Naive thymus-derived CD4-positive, alpha-beta T cell (primary cell): ENCODE measurements at regions of chr12 and their contacts with region 1.

Region 1: DNA sequence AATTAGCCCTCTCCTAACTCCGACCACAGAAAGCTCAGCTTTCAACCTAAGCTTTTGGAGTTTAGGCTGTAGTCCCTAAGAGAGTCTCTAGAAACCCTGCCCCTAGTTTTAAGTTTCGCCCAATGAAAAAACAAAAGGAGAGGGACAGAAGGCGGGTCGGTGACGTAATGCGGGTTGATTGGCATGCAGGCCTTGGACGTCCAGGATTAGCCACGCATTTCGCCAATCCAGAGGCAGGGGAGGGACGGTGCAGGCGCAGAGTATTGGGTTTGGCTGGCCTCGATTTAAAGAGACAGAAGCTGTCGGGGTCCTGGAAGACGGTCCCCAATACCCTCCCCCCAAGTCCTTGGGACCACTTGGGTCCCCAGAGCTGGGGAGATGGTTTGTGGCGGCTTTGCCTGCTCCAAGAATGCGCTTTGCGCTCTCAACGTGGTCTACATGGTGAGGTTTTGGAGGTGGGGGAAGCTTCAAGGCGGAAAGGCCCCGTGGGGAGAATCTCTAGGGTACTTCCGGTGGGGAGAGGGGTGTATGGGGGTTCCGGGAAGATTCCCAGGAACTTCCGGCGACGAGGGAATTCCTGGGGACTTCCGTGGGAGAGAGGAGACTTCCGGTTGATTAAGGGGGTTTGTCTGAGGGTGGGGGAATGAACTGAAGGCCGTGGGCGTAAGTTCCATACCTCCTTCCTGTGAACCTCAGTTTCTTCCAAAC is at the start of gene TSPAN31:
- DNase-seq: peak; percentile 70 to 97 (median 94)
- ATAC-seq: peak; percentile 89
- H3K4me3 ChIP-seq: peak within 1 kb of the TSS; percentile 92
- H3K4me3 Mint-ChIP-seq: peak within 1 kb of the TSS; percentile 82 to 100 (median 91)
- H3K27ac ChIP-seq: peak within 1 kb of the TSS; percentile 91
- H3K27ac Mint-ChIP-seq: peak within 1 kb of the TSS; percentile 88 to 97 (median 95)
- H3K4me1 ChIP-seq: peaks cover 33 to 34% of the 10 kb centered on the region in 2 donors
- H3K4me1 Mint-ChIP-seq: peaks cover 35 to 64% (median 52%) of the 10 kb centered on the region in 7 donors
- H3K27me3 ChIP-seq: no peaks in the 10 kb centered on the region
- H3K27me3 Mint-ChIP-seq: no peaks in the 10 kb centered on the region
- total RNA-seq, gene TSPAN31: 12.3 to 23.9 (median 20.3) TPM

Region 2: GRCh38 chr12:56333679-56334489 is 1411.0 kb before region 1 on chr12 and contains the start of gene PAN2:
- CTCF ChIA-PET with region 1: no interaction called
- POLR2A ChIA-PET with region 1: no interaction called
- intact Hi-C with region 1: loop called in 1 of 2 experiments (anchors 10 kb)
- DNase-seq: peak; percentile 74 to 94 (median 92)
- ATAC-seq: peak; percentile 90
- H3K4me3 ChIP-seq: peak within 1 kb of the TSS; percentile 93
- H3K4me3 Mint-ChIP-seq: peak within 1 kb of the TSS; percentile 89 to 99 (median 95)
- H3K27ac ChIP-seq: peak within 1 kb of the TSS; percentile 98
- H3K27ac Mint-ChIP-seq: peak within 1 kb of the TSS; percentile 97 to 100 (median 99)
- H3K4me1 ChIP-seq: peaks cover 27 to 30% of the 10 kb centered on the region in 2 donors
- H3K4me1 Mint-ChIP-seq: peaks cover 16 to 66% (median 48%) of the 10 kb centered on the region in 7 donors
- H3K27me3 ChIP-seq: no peaks in the 10 kb centered on the region
- H3K27me3 Mint-ChIP-seq: peaks cover 0 to 2% (median 0%) of the 10 kb centered on the region in 5 donors
- total RNA-seq, gene PAN2: 65.8 to 279 (median 144) TPM

Region 3: DNA sequence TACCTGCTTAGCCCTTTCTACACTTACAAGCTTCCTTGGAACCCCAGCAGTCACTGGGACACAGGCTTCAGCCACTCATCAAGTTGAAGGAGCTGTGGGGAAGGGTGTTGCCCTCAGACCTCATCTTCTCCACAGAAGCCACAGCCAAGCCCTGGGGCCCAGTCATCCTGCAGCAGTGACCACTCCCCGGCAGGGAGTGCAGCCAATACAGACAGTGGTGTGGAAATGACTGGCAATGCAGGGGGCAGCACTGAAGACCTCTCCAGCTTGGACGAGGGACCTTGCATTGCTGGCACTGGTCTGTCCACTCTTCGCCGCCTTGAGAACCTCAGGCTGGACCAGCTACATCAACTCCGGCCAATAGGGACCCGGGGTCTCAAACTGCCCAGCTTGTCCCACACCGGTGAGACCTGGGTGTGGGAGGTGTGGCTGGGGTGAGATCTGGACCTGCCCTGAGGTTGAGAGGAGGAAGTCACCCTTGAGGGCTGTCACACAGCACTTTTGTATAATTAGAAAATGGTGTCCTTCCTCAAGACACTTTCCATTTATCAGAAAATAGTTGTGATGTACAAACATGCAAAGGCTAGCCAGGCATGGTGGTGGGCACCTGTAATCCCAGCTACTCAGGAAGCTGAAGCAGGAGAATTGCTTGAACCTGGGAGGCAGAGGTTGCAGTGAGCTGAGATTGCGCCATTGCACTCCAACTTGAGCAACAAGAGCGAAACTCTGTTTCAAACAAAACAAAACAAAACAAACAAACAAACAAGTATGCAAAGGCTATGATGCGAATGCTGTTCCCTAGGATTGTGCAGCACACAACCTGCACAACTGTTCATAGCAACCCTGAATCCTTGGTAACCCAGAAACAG is 275.4 kb before region 1 on chr12:
- CTCF ChIA-PET with region 1: no interaction called
- POLR2A ChIA-PET with region 1: no interaction called
- intact Hi-C with region 1: no loop called
- DNase-seq: no peak
- ATAC-seq: peak; percentile 6
- H3K4me3 ChIP-seq: no peak overlapping the region
- H3K4me3 Mint-ChIP-seq: no peak overlapping the region
- H3K27ac ChIP-seq: no peak overlapping the region
- H3K27ac Mint-ChIP-seq: peak overlapping the region in 5 of 9 donors; percentile 10 to 56 (median 41)
- H3K4me1 ChIP-seq: peaks cover 12 to 28% of the 10 kb centered on the region in 2 donors
- H3K4me1 Mint-ChIP-seq: peaks cover 34 to 52% (median 45%) of the 10 kb centered on the region in 7 donors
- H3K27me3 ChIP-seq: no peaks in the 10 kb centered on the region
- H3K27me3 Mint-ChIP-seq: no peaks in the 10 kb centered on the region

Region 4: DNA sequence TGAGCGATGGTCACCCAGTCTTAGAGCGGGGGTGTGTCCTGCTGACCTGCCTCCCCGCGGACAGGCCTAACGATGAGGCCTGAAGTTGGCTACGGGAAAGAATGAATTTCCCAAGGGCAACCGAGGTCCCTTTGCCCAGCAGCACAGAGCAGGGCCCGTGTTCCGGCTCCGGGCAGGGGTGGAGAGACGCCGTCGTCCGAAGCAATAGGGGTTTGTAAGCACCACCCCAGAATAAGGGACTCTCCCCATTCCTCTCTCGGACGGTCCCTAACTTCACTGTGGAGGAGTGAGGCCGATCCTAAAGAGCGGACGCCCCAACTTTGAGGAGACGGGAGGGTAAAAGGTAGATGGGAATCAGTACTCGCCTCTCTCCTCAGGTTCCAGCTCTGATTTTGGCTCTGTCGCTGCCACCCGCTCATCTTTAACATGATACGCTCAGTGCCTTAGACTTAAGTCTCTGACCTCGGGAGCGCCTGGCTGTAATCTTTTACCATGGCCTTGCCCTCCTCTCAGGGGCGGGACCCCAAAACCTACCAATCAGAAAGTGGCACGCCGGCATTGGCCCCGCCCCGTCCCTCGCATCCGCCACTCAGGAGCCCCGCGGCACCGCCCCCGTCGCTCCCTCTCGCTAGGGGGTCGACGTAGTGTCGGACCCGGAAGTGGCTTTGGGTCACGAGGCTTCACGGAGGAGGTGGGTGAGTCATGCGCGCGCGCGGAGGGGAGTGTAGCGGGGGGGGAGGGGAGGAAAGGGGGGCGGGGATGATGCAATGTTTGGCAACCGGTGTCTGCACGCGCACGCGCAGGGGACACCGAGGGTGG is 224.7 kb before region 1 on chr12 and contains the start of gene DDIT3:
- CTCF ChIA-PET with region 1: no interaction called
- POLR2A ChIA-PET with region 1: interaction called, 3 read pairs
- intact Hi-C with region 1: loop called (anchors 1 kb)
- DNase-seq: peak; percentile 98 to 99 (median 99)
- ATAC-seq: peak; percentile 89
- H3K4me3 ChIP-seq: peak within 1 kb of the TSS; percentile 100
- H3K4me3 Mint-ChIP-seq: peak within 1 kb of the TSS; percentile 89 to 99 (median 98)
- H3K27ac ChIP-seq: peak within 1 kb of the TSS; percentile 95
- H3K27ac Mint-ChIP-seq: peak within 1 kb of the TSS; percentile 97 to 100 (median 99)
- H3K4me1 ChIP-seq: peaks cover 32 to 41% of the 10 kb centered on the region in 2 donors
- H3K4me1 Mint-ChIP-seq: peaks cover 47 to 80% (median 56%) of the 10 kb centered on the region in 7 donors
- H3K27me3 ChIP-seq: no peaks in the 10 kb centered on the region
- H3K27me3 Mint-ChIP-seq: peaks cover 0 to 7% (median 0%) of the 10 kb centered on the region in 5 donors
- total RNA-seq, gene DDIT3: 19.6 to 124 (median 51.6) TPM

Region 5: GRCh38 chr12:57590536-57591479 is 154.1 kb before region 1 on chr12 and contains the start of gene PIP4K2C:
- CTCF ChIA-PET with region 1: interaction called, 3 read pairs
- POLR2A ChIA-PET with region 1: interaction called, 4 read pairs
- intact Hi-C with region 1: loop called in 1 of 2 experiments (anchors 2 kb)
- DNase-seq: peak; percentile 49 to 79 (median 65)
- ATAC-seq: peak; percentile 95
- H3K4me3 ChIP-seq: peak within 1 kb of the TSS; percentile 83
- H3K4me3 Mint-ChIP-seq: peak within 1 kb of the TSS; percentile 84 to 92 (median 89)
- H3K27ac ChIP-seq: peak within 1 kb of the TSS; percentile 76
- H3K27ac Mint-ChIP-seq: peak within 1 kb of the TSS; percentile 79 to 94 (median 91)
- H3K4me1 ChIP-seq: peaks cover 14 to 21% of the 10 kb centered on the region in 2 donors
- H3K4me1 Mint-ChIP-seq: peaks cover 24 to 35% (median 26%) of the 10 kb centered on the region in 7 donors
- H3K27me3 ChIP-seq: no peaks in the 10 kb centered on the region
- H3K27me3 Mint-ChIP-seq: peaks cover 0 to 3% (median 0%) of the 10 kb centered on the region in 5 donors
- total RNA-seq, gene PIP4K2C: 20.1 to 29.7 (median 21.9) TPM

Region 6: GRCh38 chr12:57726151-57726883 is 18.6 kb before region 1 on chr12:
- CTCF ChIA-PET with region 1: no interaction called
- POLR2A ChIA-PET with region 1: interaction called, 10 read pairs
- intact Hi-C with region 1: loop called (anchors 1 to 2 kb)
- DNase-seq: peak in 2 of 9 donors; percentile 11 to 32
- ATAC-seq: peak; percentile 69
- H3K4me3 ChIP-seq: no peak overlapping the region
- H3K4me3 Mint-ChIP-seq: peak overlapping the region in 2 of 10 donors; percentile 29 to 58
- H3K27ac ChIP-seq: peak overlapping the region; percentile 21
- H3K27ac Mint-ChIP-seq: peak overlapping the region in 3 of 9 donors; percentile 26 to 67 (median 67)
- H3K4me1 ChIP-seq: no peaks in the 10 kb centered on the region
- H3K4me1 Mint-ChIP-seq: peaks cover 13 to 28% (median 17%) of the 10 kb centered on the region in 7 donors
- H3K27me3 ChIP-seq: no peaks in the 10 kb centered on the region
- H3K27me3 Mint-ChIP-seq: no peaks in the 10 kb centered on the region

Region 7: DNA sequence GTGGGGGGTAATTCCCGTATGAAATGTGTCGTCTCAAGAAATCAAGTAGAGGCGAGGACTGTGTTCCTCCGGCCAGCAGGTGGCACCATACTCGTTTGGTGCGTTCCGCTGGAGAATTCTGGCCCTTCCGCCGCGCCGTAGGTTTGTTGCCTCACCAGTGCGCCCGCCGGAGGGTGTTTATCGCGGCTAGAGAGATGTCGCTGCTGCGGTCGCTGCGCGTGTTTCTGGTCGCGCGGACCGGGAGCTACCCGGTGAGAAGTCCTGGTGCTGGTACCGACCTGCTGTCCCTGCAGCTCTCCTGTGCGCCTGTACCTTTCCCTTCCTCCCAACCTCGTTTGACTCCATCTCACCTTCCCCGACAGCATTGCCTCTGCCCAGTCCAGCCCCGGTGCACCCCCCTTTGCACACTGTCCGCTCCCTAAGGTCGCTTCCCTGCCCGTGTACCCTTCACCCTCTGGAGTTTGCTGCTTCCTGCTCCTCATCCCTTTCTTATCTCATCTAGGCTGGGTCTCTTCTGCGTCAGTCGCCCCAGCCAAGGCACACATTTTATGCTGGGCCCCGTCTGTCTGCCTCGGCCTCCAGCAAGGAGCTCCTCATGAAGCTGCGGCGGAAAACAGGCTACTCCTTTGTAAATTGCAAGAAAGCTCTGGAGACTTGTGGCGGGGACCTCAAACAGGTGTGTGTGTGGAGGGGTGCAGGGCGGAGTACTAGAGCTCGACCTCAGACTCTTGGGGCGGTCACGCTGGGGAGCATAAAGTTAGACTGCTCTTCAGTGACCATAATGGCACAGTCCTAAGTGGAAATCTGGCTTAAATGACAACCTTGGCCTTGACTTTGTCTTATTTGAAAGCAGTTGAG is 37.9 kb after region 1 on chr12 and contains the start of gene TSFM:
- CTCF ChIA-PET with region 1: no interaction called
- POLR2A ChIA-PET with region 1: interaction called, 7 read pairs
- intact Hi-C with region 1: loop called in 1 of 2 experiments (anchors 1 kb)
- DNase-seq: peak; percentile 90 to 97 (median 95)
- ATAC-seq: peak; percentile 99
- H3K4me3 ChIP-seq: peak within 1 kb of the TSS; percentile 97
- H3K4me3 Mint-ChIP-seq: peak within 1 kb of the TSS; percentile 96 to 100 (median 99)
- H3K27ac ChIP-seq: peak within 1 kb of the TSS; percentile 85
- H3K27ac Mint-ChIP-seq: peak within 1 kb of the TSS; percentile 95 to 100 (median 99)
- H3K4me1 ChIP-seq: peaks cover 36 to 40% of the 10 kb centered on the region in 2 donors
- H3K4me1 Mint-ChIP-seq: peaks cover 23 to 65% (median 48%) of the 10 kb centered on the region in 7 donors
- H3K27me3 ChIP-seq: no peaks in the 10 kb centered on the region
- H3K27me3 Mint-ChIP-seq: no peaks in the 10 kb centered on the region
- total RNA-seq, gene TSFM: 17.8 to 34.9 (median 22.3) TPM